Activated CD8-positive, alpha-beta T cell treated with anti-CD3 and anti-CD28 coated beads for 36 hours (primary cell): ENCODE measurements at regions of chrX and their contacts with region 1.

Region 1: DNA sequence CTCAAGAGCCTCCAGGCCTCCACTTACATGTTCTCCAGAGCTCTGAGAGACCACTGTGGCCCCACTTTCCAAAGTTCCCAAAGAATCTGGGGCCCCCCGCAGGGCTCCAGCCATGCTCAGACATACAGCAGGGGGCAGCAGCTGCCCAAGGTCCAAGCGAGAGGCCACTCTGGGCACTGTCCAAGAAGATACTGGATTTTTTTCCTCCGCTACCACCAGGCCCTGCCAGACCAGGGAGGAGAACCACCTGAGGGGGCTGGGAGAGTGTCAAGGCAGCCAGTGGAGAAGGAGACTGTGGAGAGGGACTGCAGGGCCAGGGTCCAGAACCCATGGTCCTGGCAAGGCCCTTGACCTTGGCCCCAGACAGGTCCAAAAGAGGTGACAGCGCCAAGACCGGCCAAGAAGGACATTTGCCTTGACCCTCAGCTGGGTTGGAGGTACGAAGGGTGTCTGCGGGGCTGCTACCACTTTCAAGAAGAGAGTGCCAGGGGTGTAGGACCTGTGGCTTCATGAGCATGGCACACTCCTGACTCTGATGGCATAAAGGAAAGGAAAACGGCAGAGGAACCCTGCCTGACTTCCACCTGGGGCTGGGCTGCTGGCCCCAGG is 5.3 kb downstream of the EMD start:
- DNase-seq: no peak
- ATAC-seq: no peak
- H3K4me3 Mint-ChIP-seq: no peak overlapping the region
- H3K27ac Mint-ChIP-seq: peak overlapping the region; percentile 68
- H3K4me1 Mint-ChIP-seq: peaks cover 9% of the 10 kb centered on the region
- H3K27me3 Mint-ChIP-seq: no peaks in the 10 kb centered on the region
- CTCF ChIP-seq: no peak

Region 2: GRCh38 chrX:154369449-154370299 is 14.7 kb before region 1 on chrX:
- CTCF ChIA-PET with region 1: interaction called, 11 read pairs
- POLR2A ChIA-PET with region 1: interaction called, 3 read pairs
- intact Hi-C with region 1: no loop called
- DNase-seq: peak; percentile 81
- ATAC-seq: peak; percentile 8
- H3K4me3 Mint-ChIP-seq: peak overlapping the region; percentile 96
- H3K27ac Mint-ChIP-seq: peak overlapping the region; percentile 90
- H3K4me1 Mint-ChIP-seq: peaks cover 25% of the 10 kb centered on the region
- H3K27me3 Mint-ChIP-seq: no peaks in the 10 kb centered on the region
- CTCF ChIP-seq: no peak

Region 3: GRCh38 chrX:154515878-154516655 is 131.7 kb after region 1 on chrX and contains the start of gene FAM3A:
- CTCF ChIA-PET with region 1: no interaction called
- POLR2A ChIA-PET with region 1: no interaction called
- intact Hi-C with region 1: no loop called
- DNase-seq: peak; percentile 93
- ATAC-seq: peak; percentile 99
- H3K4me3 Mint-ChIP-seq: peak within 1 kb of the TSS; percentile 82
- H3K27ac Mint-ChIP-seq: peak within 1 kb of the TSS; percentile 92
- H3K4me1 Mint-ChIP-seq: peaks cover 29% of the 10 kb centered on the region
- H3K27me3 Mint-ChIP-seq: no peaks in the 10 kb centered on the region
- CTCF ChIP-seq: no peak
- total RNA-seq, gene FAM3A: 27.9 to 31.9 TPM